Activated CD4-positive, alpha-beta T cell treated with anti-CD3 and anti-CD28 coated beads, Interleukin-2, amount 10 ng/mL, durations not matched to agents 7 days and 5 days (primary cell): ENCODE measurements at regions of chr11 and their contacts with region 1.

Region 1: GRCh38 chr11:73177778-73178577 is 35.9 kb upstream of the FCHSD2 start:
- DNase-seq: peak; percentile 87
- H3K4me3 Mint-ChIP-seq: no peak overlapping the region
- H3K27ac Mint-ChIP-seq: no peak overlapping the region
- H3K4me1 Mint-ChIP-seq: peaks cover 26% of the 10 kb centered on the region
- H3K27me3 Mint-ChIP-seq: peaks cover 16% of the 10 kb centered on the region

Region 2: GRCh38 chr11:72722050-72722748 is 455.8 kb before region 1 on chr11:
- CTCF ChIA-PET with region 1: interaction called, 20 read pairs
- POLR2A ChIA-PET with region 1: no interaction called
- DNase-seq: peak; percentile 90
- H3K4me3 Mint-ChIP-seq: peak overlapping the region; percentile 86
- H3K27ac Mint-ChIP-seq: peak overlapping the region; percentile 95
- H3K4me1 Mint-ChIP-seq: peaks cover 57% of the 10 kb centered on the region
- H3K27me3 Mint-ChIP-seq: no peaks in the 10 kb centered on the region

Region 3: DNA sequence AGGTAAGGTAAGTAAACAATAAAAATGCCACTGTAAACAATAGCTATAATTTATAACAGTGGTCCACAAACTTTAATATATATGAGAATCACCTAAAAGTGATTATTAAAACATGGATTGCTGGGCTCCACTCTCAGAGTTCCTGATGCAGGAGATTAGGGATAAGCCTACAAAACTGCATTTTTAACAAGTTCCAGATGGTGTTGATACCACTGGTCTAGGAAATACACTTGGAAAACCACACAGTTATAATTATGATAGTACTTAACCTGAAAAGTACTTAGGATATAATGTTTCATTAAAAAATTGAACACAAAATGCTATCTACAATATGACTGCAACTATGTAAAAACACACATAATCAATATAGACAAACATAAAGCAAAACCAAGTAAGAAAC is 56.3 kb before region 1 on chr11:
- CTCF ChIA-PET with region 1: no interaction called
- POLR2A ChIA-PET with region 1: no interaction called
- DNase-seq: no peak
- H3K4me3 Mint-ChIP-seq: no peak overlapping the region
- H3K27ac Mint-ChIP-seq: no peak overlapping the region
- H3K4me1 Mint-ChIP-seq: peaks cover 2% of the 10 kb centered on the region
- H3K27me3 Mint-ChIP-seq: no peaks in the 10 kb centered on the region

Region 4: GRCh38 chr11:73141848-73142286 is 36.1 kb before region 1 on chr11:
- CTCF ChIA-PET with region 1: interaction called, 19 read pairs
- POLR2A ChIA-PET with region 1: no interaction called
- DNase-seq: peak; percentile 59
- H3K4me3 Mint-ChIP-seq: peak overlapping the region; percentile 97
- H3K27ac Mint-ChIP-seq: peak overlapping the region; percentile 94
- H3K4me1 Mint-ChIP-seq: peaks cover 61% of the 10 kb centered on the region
- H3K27me3 Mint-ChIP-seq: no peaks in the 10 kb centered on the region

Region 5: DNA sequence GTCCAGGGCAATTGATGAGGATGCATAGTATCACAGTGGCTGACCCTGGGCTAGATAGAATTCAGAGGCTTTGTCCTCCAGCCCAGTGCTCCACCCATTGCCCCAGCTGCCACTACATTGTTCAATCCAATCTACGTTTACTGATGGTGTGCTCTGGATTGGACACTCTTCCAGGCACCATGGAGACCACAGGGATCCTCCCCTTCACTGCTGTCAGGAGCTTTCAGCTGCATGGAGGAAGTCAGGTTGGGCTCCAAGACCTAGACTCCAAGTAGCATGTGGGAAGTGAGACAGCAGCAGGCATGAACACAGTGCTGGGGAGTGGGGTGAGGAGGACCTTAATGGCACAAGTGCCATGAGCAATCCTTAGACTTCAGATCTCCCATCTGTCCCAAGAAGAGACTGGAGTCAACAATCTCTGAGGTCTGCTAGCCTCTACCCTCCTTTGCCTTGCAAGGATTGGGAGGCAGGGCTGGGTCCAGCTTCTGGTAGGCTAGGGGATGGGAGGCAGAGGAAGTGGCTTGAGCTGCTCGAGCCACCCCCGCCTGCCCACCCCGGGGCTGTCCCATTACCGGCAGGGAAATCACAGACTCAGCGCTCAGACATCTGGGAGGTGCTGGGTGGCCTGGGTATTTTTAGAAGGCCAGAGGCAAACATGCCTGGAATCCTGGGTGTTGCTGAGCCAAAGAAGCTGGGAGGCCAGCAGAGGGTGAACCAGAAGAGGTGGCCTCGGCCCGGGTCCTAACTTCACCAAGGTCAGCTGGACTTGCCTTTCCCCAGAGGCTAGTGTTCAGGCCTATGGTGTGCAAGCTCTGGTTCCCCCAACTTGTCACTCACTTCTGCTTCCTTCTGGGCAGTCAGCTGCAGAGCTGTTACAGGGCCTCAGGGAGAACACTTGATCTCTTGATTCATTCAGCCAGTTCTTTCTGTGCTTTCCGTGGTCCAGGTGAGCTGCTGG is 20.6 kb before region 1 on chr11:
- CTCF ChIA-PET with region 1: interaction called, 113 read pairs
- POLR2A ChIA-PET with region 1: no interaction called
- DNase-seq: no peak
- H3K4me3 Mint-ChIP-seq: no peak overlapping the region
- H3K27ac Mint-ChIP-seq: peak overlapping the region; percentile 51
- H3K4me1 Mint-ChIP-seq: peaks cover 56% of the 10 kb centered on the region
- H3K27me3 Mint-ChIP-seq: no peaks in the 10 kb centered on the region

Region 6: GRCh38 chr11:73195231-73195992 is 17.4 kb after region 1 on chr11:
- CTCF ChIA-PET with region 1: interaction called, 18 read pairs
- POLR2A ChIA-PET with region 1: no interaction called
- DNase-seq: no peak
- H3K4me3 Mint-ChIP-seq: no peak overlapping the region
- H3K27ac Mint-ChIP-seq: no peak overlapping the region
- H3K4me1 Mint-ChIP-seq: no peaks in the 10 kb centered on the region
- H3K27me3 Mint-ChIP-seq: peaks cover 2% of the 10 kb centered on the region